Left lung (tissue), 14 donors: ENCODE measurements at regions of chr2 and their contacts with region 1.

Region 1: DNA sequence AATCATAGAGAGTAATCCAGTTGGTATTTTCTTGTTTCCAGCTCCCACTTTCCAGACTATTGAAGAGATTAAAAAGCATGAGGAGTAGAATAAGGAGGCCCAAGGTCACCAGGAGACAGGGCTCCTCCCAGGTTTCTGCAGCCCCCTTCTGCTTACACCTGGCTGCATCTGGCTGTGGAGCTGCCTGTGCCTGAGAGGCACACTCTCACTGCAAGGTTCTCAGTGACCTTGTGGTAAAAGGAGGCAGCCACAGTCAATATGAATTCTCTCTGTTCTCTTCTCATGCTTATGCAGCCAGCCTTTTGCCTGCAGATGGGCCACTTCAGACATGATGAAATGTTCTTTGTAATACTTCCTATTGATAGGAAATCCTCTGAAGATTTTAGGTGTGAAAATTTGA is 233.7 kb downstream of the MYO3B start:
- DNase-seq: no peak
- ATAC-seq: no peak
- H3K4me3 ChIP-seq: no peak overlapping the region
- H3K27ac ChIP-seq: no peak overlapping the region
- H3K4me1 ChIP-seq: peaks cover 0 to 10% of the 10 kb centered on the region in 2 donors
- H3K27me3 ChIP-seq: peaks cover 0 to 15% of the 10 kb centered on the region in 2 donors
- CTCF ChIP-seq: no peak

Region 2: GRCh38 chr2:170815746-170816503 is 404.3 kb after region 1 on chr2:
- intact Hi-C with region 1: loop called in 1 of 2 experiments (anchors 10 kb)
- DNase-seq: peak in 3 of 4 donors; percentile 65 to 85 (median 76)
- ATAC-seq: peak; percentile 77
- H3K4me3 ChIP-seq: peak overlapping the region; percentile 29 to 44
- H3K27ac ChIP-seq: no peak overlapping the region
- H3K4me1 ChIP-seq: peaks cover 26 to 55% of the 10 kb centered on the region in 2 donors
- H3K27me3 ChIP-seq: peaks cover 78 to 85% of the 10 kb centered on the region in 2 donors
- CTCF ChIP-seq: peak; percentile 68 to 87